Gastrocnemius medialis (tissue), 4 donors: ENCODE measurements at regions of chr1 and their contacts with region 1.

Region 1: DNA sequence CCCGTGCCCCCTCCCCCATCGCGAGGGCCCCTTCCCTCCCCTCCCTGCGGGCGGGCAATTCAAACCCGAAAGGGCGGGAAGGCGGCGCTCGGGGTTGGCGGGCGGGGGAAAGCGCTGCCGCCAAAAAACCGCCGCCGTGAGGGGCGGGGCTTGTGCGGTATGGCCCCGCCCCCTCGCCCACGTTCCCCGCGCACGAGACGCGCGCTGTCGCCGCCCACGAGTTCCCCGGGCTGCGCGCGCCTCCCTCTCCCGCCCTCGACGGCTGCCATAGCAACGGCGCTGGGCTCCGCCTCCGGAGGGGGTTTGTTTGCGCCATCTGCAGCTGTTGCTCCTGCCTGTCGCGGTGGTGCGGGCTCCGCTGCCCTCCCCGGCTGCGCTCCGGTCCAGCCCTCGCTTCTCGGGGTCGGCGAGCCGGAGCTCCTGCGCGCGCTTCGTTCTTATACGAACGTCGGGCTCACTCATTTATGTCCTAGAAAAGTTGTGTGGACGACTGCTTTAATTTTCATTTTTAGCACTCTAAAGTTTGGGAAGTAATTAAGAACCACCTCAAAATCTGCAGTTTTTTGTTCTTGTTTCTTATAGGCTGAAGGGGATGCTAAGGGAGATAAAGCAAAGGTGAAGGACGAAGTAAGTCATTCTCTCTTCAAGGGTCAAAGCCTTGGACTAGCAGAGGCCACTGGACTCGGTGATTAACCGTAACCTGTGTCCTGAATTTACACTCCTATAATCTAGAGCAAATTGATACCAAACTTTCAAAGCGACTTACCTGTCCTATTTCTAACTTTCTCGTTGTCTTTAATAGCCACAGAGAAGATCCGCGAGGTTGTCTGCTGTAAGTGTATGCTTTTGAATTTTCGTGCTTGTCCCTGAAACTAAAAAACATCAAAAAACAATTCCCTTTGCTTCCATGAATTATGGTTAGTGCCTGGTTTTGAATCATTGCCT is 933 bp downstream of the HMGN2 start:
- DNase-seq: peak; percentile 95 to 97
- ATAC-seq: peak; percentile 82 to 87
- H3K4me3 ChIP-seq: peak overlapping the region; percentile 71 to 100 (median 94)
- H3K27ac ChIP-seq: peak overlapping the region; percentile 93 to 100 (median 100)
- H3K4me1 ChIP-seq: peaks cover 29 to 33% of the 10 kb centered on the region in 2 donors
- H3K27me3 ChIP-seq: no peaks in the 10 kb centered on the region
- CTCF ChIP-seq: no peak
- POLR2A ChIP-seq: peak; percentile 72 to 76

Region 2: GRCh38 chr1:26225033-26225831 is 247.9 kb before region 1 on chr1:
- in situ Hi-C with region 1: no loop called
- intact Hi-C with region 1: no loop called
- DNase-seq: peak; percentile 27 to 80
- ATAC-seq: peak; percentile 69 to 84
- H3K4me3 ChIP-seq: peak overlapping the region; percentile 59 to 67 (median 60)
- H3K27ac ChIP-seq: peak overlapping the region; percentile 29 to 66 (median 63)
- H3K4me1 ChIP-seq: peaks cover 0 to 7% of the 10 kb centered on the region in 2 donors
- H3K27me3 ChIP-seq: no peaks in the 10 kb centered on the region
- CTCF ChIP-seq: no peak
- POLR2A ChIP-seq: peak in 1 of 2 donors; percentile 22

Region 3: DNA sequence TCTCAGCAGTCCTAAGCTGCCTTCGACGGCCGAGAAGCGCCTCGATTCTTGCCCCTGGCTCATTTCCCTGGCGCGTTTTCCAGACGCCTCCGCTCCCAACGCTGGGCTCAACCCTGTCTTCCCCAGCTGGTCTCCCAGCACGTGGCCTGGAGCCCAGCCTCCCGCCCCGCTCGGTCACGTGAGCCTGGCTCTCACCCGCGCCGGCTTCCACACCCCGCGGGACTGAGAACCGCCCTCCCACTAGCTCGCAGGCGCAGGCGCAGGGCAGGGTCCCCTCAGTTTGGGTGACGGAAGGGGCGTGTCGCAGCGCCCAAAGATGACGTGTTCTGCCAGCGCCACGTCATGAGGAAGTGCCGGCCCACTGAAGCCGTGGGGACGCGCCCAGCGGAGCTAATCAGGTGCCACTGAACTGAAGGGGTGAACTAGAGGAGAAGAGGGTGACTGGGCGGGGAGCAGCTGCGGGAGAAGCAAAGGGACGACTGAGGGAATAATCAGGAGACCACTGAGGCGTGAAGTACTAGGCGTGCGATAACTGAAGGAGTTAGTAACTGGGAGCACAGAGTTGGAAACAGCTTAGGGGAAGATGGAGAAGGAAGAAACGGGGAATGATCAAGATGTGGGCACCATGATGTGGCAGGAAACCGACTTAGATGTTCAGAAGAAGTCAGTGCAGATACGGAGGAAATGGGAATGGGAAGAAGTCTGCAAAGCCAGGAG is 41.0 kb before region 1 on chr1 and contains the start of gene DHDDS:
- in situ Hi-C with region 1: no loop called
- intact Hi-C with region 1: loop called (anchors 1 kb)
- DNase-seq: peak; percentile 97 to 98
- ATAC-seq: peak; percentile 97
- H3K4me3 ChIP-seq: peak within 1 kb of the TSS; percentile 67 to 79 (median 74)
- H3K27ac ChIP-seq: peak within 1 kb of the TSS; percentile 82 to 89 (median 87)
- H3K4me1 ChIP-seq: peaks cover 13 to 16% of the 10 kb centered on the region in 2 donors
- H3K27me3 ChIP-seq: no peaks in the 10 kb centered on the region
- CTCF ChIP-seq: peak in 3 of 5 experiments; percentile 1 to 45 (median 15)
- POLR2A ChIP-seq: peak; percentile 69 to 82
- total RNA-seq, gene DHDDS: 12.1 to 30.7 (median 22.3) TPM

Region 4: GRCh38 chr1:26500488-26501175 is 27.5 kb after region 1 on chr1:
- in situ Hi-C with region 1: no loop called
- intact Hi-C with region 1: loop called (anchors 1 kb)
- DNase-seq: peak; percentile 60 to 68
- ATAC-seq: peak; percentile 79 to 88
- H3K4me3 ChIP-seq: peak overlapping the region; percentile 69 to 91 (median 74)
- H3K27ac ChIP-seq: peak overlapping the region; percentile 78 to 82 (median 81)
- H3K4me1 ChIP-seq: peaks cover 0 to 9% of the 10 kb centered on the region in 2 donors
- H3K27me3 ChIP-seq: no peaks in the 10 kb centered on the region
- CTCF ChIP-seq: peak in 1 of 5 experiments; percentile 28
- POLR2A ChIP-seq: peak in 1 of 2 donors; percentile 47